IMR-90 (cell line): ENCODE measurements at regions of chr4 and their contacts with region 1.

Region 1: DNA sequence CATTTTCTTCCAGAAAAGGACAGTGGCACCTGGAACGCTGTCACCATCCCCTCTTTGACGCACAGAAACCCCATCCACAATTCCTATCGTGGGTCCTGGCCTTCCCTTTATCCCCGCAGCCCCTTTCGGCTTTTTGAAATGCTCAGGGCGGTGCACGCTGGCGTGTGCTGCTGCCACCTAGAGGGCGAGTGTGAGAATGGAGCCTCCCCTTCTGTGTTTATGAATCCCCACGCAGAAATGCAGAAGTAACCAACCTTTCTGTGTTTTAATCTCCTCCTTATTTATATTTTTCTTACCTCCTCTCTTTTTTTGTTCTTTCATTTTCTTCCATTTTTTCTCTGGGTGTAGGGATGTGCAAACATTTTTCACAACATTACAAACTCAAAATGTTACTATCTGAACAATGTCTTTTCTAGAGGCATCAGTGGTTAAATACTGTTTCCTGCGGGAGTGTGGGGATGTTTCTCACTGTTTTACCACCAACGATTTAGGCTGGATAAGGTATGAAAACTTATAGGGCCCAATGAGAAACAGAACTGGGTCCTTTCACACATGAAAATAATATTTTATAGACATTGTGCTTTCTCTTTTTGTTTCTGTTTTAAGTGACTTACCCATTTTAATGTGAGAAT is 50.0 kb downstream of the TMA16 start:
- DNase-seq: peak; percentile 40
- ATAC-seq: peak; percentile 54
- H3K4me3 ChIP-seq: peak overlapping the region; percentile 26
- H3K27ac ChIP-seq: no peak overlapping the region
- H3K4me1 ChIP-seq: peaks cover 9% of the 10 kb centered on the region
- H3K27me3 ChIP-seq: no peaks in the 10 kb centered on the region
- CTCF ChIP-seq: peak; percentile 85
- POLR2A ChIP-seq: no peak
- RAD21 ChIP-seq: peak; percentile 69

Region 2: GRCh38 chr4:162497564-162498167 is 1046.9 kb before region 1 on chr4:
- CTCF ChIA-PET with region 1: no interaction called
- POLR2A ChIA-PET with region 1: no interaction called
- dilution Hi-C with region 1: no loop called
- in situ Hi-C with region 1: loop called (anchors 10 kb)
- intact Hi-C with region 1: loop called (anchors 1 kb)
- DNase-seq: peak; percentile 42
- ATAC-seq: peak; percentile 68; the same call in 1 of the 2 replicates
- H3K4me3 ChIP-seq: no peak overlapping the region
- H3K27ac ChIP-seq: no peak overlapping the region
- H3K4me1 ChIP-seq: no peaks in the 10 kb centered on the region
- H3K27me3 ChIP-seq: no peaks in the 10 kb centered on the region
- CTCF ChIP-seq: peak; percentile 85
- POLR2A ChIP-seq: no peak
- RAD21 ChIP-seq: peak; percentile 94

Region 3: GRCh38 chr4:163107754-163108153 is 436.8 kb before region 1 on chr4:
- CTCF ChIA-PET with region 1: no interaction called
- POLR2A ChIA-PET with region 1: no interaction called
- dilution Hi-C with region 1: no loop called
- in situ Hi-C with region 1: loop called (anchors 25 kb)
- intact Hi-C with region 1: loop called (anchors 5 kb)
- DNase-seq: peak; percentile 46
- ATAC-seq: peak; percentile 46; the same call in 1 of the 2 replicates
- H3K4me3 ChIP-seq: no peak overlapping the region
- H3K27ac ChIP-seq: no peak overlapping the region
- H3K4me1 ChIP-seq: no peaks in the 10 kb centered on the region
- H3K27me3 ChIP-seq: no peaks in the 10 kb centered on the region
- CTCF ChIP-seq: peak; percentile 54
- POLR2A ChIP-seq: no peak
- RAD21 ChIP-seq: peak; percentile 58

Region 4: GRCh38 chr4:163280703-163281519 is 263.6 kb before region 1 on chr4:
- CTCF ChIA-PET with region 1: no interaction called
- POLR2A ChIA-PET with region 1: no interaction called
- dilution Hi-C with region 1: no loop called
- in situ Hi-C with region 1: no loop called
- intact Hi-C with region 1: no loop called
- DNase-seq: no peak
- ATAC-seq: no peak
- H3K4me3 ChIP-seq: no peak overlapping the region
- H3K27ac ChIP-seq: no peak overlapping the region
- H3K4me1 ChIP-seq: no peaks in the 10 kb centered on the region
- H3K27me3 ChIP-seq: no peaks in the 10 kb centered on the region
- CTCF ChIP-seq: no peak
- POLR2A ChIP-seq: no peak
- RAD21 ChIP-seq: no peak

Region 5: GRCh38 chr4:163295138-163295537 is 249.4 kb before region 1 on chr4:
- CTCF ChIA-PET with region 1: no interaction called
- POLR2A ChIA-PET with region 1: no interaction called
- dilution Hi-C with region 1: no loop called
- in situ Hi-C with region 1: no loop called
- intact Hi-C with region 1: no loop called
- DNase-seq: no peak
- ATAC-seq: no peak
- H3K4me3 ChIP-seq: no peak overlapping the region
- H3K27ac ChIP-seq: no peak overlapping the region
- H3K4me1 ChIP-seq: no peaks in the 10 kb centered on the region
- H3K27me3 ChIP-seq: no peaks in the 10 kb centered on the region
- CTCF ChIP-seq: no peak
- POLR2A ChIP-seq: no peak
- RAD21 ChIP-seq: no peak

Region 6: GRCh38 chr4:163332500-163333406 is 211.8 kb before region 1 on chr4 and contains the start of gene NPY1R:
- CTCF ChIA-PET with region 1: no interaction called
- POLR2A ChIA-PET with region 1: no interaction called
- dilution Hi-C with region 1: no loop called
- in situ Hi-C with region 1: no loop called
- intact Hi-C with region 1: loop called (anchors 5 kb)
- DNase-seq: peak; percentile 73
- ATAC-seq: peak; percentile 98
- H3K4me3 ChIP-seq: peak within 1 kb of the TSS; percentile 46
- H3K27ac ChIP-seq: no peak within 1 kb of the TSS
- H3K4me1 ChIP-seq: no peaks in the 10 kb centered on the region
- H3K27me3 ChIP-seq: peaks cover 19% of the 10 kb centered on the region
- CTCF ChIP-seq: peak; percentile 69
- POLR2A ChIP-seq: no peak
- RAD21 ChIP-seq: peak; percentile 71
- total RNA-seq, gene NPY1R: under 0.01 TPM in 2 replicates

Region 7: GRCh38 chr4:163494360-163495162 is 50.0 kb before region 1 on chr4 and contains the start of gene TMA16:
- CTCF ChIA-PET with region 1: interaction called, 6 read pairs
- POLR2A ChIA-PET with region 1: interaction called, 5 read pairs
- dilution Hi-C with region 1: no loop called
- in situ Hi-C with region 1: no loop called
- intact Hi-C with region 1: loop called (anchors 1 kb)
- DNase-seq: peak; percentile 95
- ATAC-seq: peak; percentile 97
- H3K4me3 ChIP-seq: peak within 1 kb of the TSS; percentile 79
- H3K27ac ChIP-seq: peak within 1 kb of the TSS; percentile 77
- H3K4me1 ChIP-seq: no peaks in the 10 kb centered on the region
- H3K27me3 ChIP-seq: no peaks in the 10 kb centered on the region
- CTCF ChIP-seq: no peak
- POLR2A ChIP-seq: peak; percentile 87
- RAD21 ChIP-seq: no peak
- total RNA-seq, gene TMA16: 9.3 and 42.5 TPM in 2 replicates